A549 (cell line): ENCODE measurements at regions of chr16 and their contacts with region 1.

Region 1: GRCh38 chr16:87790278-87791032 is 24.7 kb upstream of the KLHDC4 start:
- DNase-seq: peak; percentile 83 to 94
- ATAC-seq: peak; percentile 62 to 80
- H3K4me3 ChIP-seq: peak overlapping the region; percentile 3; the same call in 1 of the 3 replicates
- H3K27ac ChIP-seq: peak overlapping the region; percentile 95 to 96
- H3K4me1 ChIP-seq: peaks cover 76% of the 10 kb centered on the region
- CTCF ChIP-seq: no peak
- EP300 ChIP-seq: peak; percentile 61 to 81; a peak in 3 of 5 replicates
- POLR2A ChIP-seq: no peak
- RAD21 ChIP-seq: peak; percentile 26 to 35; a peak in 3 of 5 replicates

Region 2: DNA sequence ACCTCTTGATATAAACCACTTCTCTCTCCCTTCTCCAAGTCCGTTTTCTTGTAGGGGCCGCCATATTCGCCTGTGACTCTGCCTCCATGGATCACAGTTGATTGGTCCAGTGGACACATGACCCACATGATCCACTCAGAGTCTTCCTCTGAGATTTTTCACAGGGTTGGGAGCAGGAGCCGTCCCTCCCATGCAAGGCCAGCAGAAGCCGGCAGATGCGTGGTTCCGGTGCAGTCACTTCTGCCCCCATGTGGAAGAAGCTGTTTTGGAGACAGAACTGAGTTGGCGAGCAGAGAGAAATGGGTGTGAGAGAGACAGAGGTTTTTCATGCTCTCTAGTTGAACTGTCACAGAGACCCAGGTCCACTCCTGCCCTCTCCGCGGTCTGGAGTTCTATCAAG is 556.5 kb before region 1 on chr16:
- CTCF ChIA-PET with region 1: no interaction called
- POLR2A ChIA-PET with region 1: no interaction called
- DNase-seq: peak in 1 of 2 experiments; percentile 36
- ATAC-seq: peak; percentile 51 to 69; a peak in 4 of 6 replicates
- H3K4me3 ChIP-seq: no peak overlapping the region
- H3K27ac ChIP-seq: no peak overlapping the region
- H3K4me1 ChIP-seq: no peaks in the 10 kb centered on the region
- CTCF ChIP-seq: no peak
- EP300 ChIP-seq: no peak
- POLR2A ChIP-seq: no peak
- RAD21 ChIP-seq: peak; percentile 27 to 55; a peak in 3 of 5 replicates

Region 3: DNA sequence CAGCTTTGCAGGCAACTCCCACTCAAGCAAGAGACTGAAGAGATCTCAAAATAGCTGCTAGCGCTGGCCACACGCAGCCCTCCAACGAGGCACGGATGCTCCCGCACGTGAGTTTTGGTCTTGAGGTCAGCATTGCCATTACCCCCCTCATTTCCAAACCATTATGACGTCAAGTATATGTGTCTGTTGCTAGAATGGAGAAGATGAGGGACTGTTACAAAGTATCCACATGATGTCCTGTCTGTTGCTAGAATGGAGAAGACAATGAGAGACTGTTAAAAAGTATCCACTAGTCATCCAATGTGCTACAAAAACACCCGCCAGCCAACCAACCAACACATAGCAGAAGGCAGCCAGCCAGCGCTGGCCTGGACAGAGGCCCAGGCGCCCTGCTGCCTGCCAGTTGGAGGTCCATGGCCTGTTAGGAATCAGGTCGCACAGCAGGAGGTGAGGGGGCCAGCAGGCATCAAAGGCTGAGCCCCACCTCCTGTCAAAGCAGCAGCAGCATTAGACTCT is 49.5 kb before region 1 on chr16:
- CTCF ChIA-PET with region 1: no interaction called
- POLR2A ChIA-PET with region 1: no interaction called
- DNase-seq: no peak
- ATAC-seq: no peak
- H3K4me3 ChIP-seq: no peak overlapping the region
- H3K27ac ChIP-seq: no peak overlapping the region
- H3K4me1 ChIP-seq: no peaks in the 10 kb centered on the region
- CTCF ChIP-seq: no peak
- EP300 ChIP-seq: no peak
- POLR2A ChIP-seq: no peak
- RAD21 ChIP-seq: no peak

Region 4: GRCh38 chr16:87806603-87807546 is 16.4 kb after region 1 on chr16:
- CTCF ChIA-PET with region 1: interaction called, 32 read pairs
- POLR2A ChIA-PET with region 1: interaction called, 44 read pairs
- DNase-seq: peak; percentile 78 to 85
- ATAC-seq: peak; percentile 78 to 83
- H3K4me3 ChIP-seq: peak overlapping the region; percentile 31
- H3K27ac ChIP-seq: peak overlapping the region; percentile 92 to 97
- H3K4me1 ChIP-seq: peaks cover 45% of the 10 kb centered on the region
- CTCF ChIP-seq: no peak
- EP300 ChIP-seq: peak; percentile 41 to 74; a peak in 2 of 5 replicates
- POLR2A ChIP-seq: peak; percentile 8; the same call in 1 of the 2 replicates
- RAD21 ChIP-seq: peak in 1 of 2 experiments; percentile 33; a peak in 1 of 5 replicates

Region 5: GRCh38 chr16:87822108-87822970 is 31.9 kb after region 1 on chr16:
- CTCF ChIA-PET with region 1: interaction called, 15 read pairs
- POLR2A ChIA-PET with region 1: interaction called, 26 read pairs
- DNase-seq: no peak
- ATAC-seq: no peak
- H3K4me3 ChIP-seq: no peak overlapping the region
- H3K27ac ChIP-seq: peak overlapping the region; percentile 97 to 99; a peak in 5 of 6 replicates
- H3K4me1 ChIP-seq: peaks cover 39% of the 10 kb centered on the region
- CTCF ChIP-seq: no peak
- EP300 ChIP-seq: no peak
- POLR2A ChIP-seq: no peak
- RAD21 ChIP-seq: no peak

Region 6: DNA sequence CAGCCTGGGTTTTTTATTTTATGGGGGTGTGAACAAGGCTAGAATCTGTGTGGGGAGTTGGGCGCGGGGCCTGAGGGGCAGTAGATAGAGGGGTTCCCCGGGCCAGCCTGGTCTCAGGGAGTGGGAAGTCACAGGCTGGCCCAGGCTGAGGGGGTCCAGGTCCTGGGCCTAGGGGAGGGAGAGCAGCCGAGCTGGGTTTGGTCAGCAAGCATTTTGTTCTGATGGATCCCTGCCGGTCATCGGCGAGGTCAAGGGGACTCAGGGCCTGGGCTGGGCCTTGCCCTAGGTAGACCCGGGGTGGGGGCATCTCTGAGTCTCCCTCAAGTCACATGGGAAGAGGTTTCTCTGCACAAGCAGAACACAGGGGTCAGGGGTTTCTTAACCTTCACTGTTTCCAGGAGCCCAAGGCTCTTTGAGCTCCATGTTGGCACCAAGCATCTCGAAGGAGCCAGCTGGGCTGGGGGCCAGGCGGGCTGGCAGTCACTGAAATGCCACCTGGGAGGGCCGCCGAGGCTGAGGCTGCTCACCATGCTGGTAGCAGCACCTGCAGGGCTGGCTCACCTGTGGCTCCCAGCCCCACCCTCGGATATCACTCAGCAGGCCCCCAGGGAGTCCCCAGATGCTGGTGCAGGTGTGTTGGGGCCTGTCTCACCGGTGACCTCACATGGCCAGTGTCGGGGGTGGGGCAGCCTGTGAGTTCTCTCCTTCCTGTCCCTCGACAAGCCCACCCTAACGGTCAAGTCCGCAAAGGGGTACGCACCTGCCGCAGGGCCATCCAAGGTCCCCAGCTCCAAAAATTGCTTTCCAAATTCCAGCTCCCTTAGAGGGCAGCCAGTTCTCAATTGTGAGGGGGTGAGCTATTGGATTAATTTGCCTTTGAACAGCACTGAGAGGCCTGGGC is 37.9 kb after region 1 on chr16:
- CTCF ChIA-PET with region 1: interaction called, 15 read pairs
- POLR2A ChIA-PET with region 1: interaction called, 26 read pairs
- DNase-seq: peak in 1 of 2 experiments; percentile 81
- ATAC-seq: 0 out of 6 replicates have a peak, but pooled peaks of 1 of the 2 experiments have one; percentile 0
- H3K4me3 ChIP-seq: no peak overlapping the region
- H3K27ac ChIP-seq: peak overlapping the region; percentile 97 to 99
- H3K4me1 ChIP-seq: peaks cover 98% of the 10 kb centered on the region
- CTCF ChIP-seq: no peak
- EP300 ChIP-seq: no peak
- POLR2A ChIP-seq: no peak
- RAD21 ChIP-seq: no peak

Region 7: DNA sequence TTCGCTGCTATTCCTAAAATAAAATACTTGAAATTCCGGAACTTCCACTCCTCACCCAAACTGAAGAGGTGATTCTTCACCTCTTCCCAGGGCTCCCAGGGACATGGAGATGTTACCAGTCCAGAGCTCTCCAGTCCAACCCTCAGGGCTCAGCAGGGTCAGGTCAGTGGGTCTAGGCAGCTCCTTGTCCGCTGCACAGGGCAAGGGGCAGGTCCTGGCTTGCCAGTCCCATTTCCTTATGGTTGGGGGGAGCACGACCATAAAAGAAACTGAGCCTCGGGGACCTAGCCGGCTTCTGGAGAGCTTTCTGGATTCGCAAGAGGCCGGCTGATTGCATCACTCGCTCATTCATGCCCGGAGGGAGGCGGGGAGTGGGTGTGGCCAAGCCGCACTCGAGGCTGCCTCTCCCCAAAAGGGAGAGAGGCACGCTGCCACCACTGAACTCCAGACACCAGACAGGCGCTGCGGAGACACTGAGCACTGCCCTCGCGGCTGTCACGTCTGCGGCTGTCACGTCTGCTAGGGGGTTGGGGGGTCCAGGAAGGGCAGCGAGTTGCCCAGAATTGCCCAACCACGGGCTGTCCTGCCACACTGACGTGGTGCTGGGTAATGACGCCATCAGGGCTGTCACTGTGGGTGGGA is 63.1 kb after region 1 on chr16:
- CTCF ChIA-PET with region 1: interaction called, 269 read pairs
- POLR2A ChIA-PET with region 1: interaction called, 4 read pairs
- DNase-seq: peak; percentile 82 to 94
- ATAC-seq: peak; percentile 15 to 18
- H3K4me3 ChIP-seq: peak overlapping the region; percentile 29
- H3K27ac ChIP-seq: peak overlapping the region; percentile 97 to 99
- H3K4me1 ChIP-seq: peaks cover 98% of the 10 kb centered on the region
- CTCF ChIP-seq: no peak
- EP300 ChIP-seq: peak; percentile 73 to 93; a peak in 3 of 5 replicates
- POLR2A ChIP-seq: 0 out of 2 replicates have a peak, but pooled peaks have one; percentile 19
- RAD21 ChIP-seq: 0 out of 5 replicates have a peak, but pooled peaks of 1 of the 2 experiments have one; percentile 12